CD4-positive, alpha-beta memory T cell (primary cell): ENCODE measurements at regions of chr9 and their contacts with region 1.

Region 1: DNA sequence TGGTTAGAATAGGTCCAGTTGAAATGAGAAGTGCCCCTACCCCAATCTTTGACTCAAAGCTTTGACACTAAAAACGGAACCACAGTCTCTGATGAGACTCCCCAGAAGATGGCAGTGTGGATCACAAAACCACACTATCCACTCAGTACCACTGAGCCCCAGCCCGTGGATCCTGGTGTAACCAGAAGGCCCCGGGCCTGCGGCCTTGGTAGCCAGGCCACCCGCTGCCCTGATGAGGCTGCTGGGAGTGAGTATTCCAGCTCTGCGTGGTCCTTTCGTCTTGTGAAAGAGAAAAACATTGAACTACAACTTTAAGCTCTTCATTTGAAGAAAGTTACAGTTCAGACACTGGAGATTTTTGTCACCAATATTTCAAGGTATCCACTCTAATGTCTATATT is 42.2 kb upstream of the FBP1 start:
- DNase-seq: peak; percentile 49 to 56 (median 55)
- H3K4me3 ChIP-seq: no peak overlapping the region
- H3K4me3 Mint-ChIP-seq: no peak overlapping the region
- H3K27ac ChIP-seq: no peak overlapping the region
- H3K27ac Mint-ChIP-seq: no peak overlapping the region
- H3K4me1 ChIP-seq: no peaks in the 10 kb centered on the region
- H3K4me1 Mint-ChIP-seq: no peaks in the 10 kb centered on the region
- H3K27me3 ChIP-seq: no peaks in the 10 kb centered on the region
- H3K27me3 Mint-ChIP-seq: peaks cover 0 to 3% of the 10 kb centered on the region in 2 donors

Region 2: DNA sequence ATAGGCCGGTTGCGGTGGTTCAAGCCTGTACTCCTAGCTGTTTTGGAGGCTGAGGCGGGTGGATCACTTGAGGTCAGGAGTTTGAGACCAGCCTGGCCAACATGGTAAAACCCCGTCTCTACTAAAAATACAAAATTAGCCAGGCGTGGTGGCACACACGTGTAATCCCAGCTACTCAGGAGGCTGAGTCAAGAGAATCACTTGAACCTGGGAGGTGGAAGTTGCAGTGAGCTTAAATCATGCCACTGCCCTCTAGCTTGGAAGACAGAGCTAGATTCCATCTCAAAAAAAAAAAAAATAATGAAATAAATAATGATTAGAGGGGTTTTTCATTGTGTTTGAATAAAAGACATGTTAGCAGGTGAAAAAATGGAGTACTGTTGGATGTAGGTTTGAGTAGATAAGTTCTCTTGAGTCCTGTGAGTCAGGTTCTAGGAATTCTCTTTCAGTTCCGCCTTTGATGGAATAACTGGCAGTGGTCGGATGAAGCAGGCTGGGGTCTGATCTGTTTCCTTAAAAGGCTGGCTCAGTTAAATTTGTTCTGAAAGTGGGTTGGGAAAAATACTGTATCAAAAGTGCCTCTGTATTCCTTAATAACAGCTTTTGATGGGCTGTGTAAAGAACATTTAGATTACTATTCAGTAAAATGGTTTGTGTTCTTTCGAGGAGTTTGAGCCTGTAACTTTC is 118.2 kb after region 1 on chr9:
- CTCF ChIA-PET with region 1: no interaction called
- POLR2A ChIA-PET with region 1: no interaction called
- intact Hi-C with region 1: no loop called
- DNase-seq: no peak
- H3K4me3 ChIP-seq: no peak overlapping the region
- H3K4me3 Mint-ChIP-seq: no peak overlapping the region
- H3K27ac ChIP-seq: no peak overlapping the region
- H3K27ac Mint-ChIP-seq: peak overlapping the region in 1 of 7 donors; percentile 63
- H3K4me1 ChIP-seq: no peaks in the 10 kb centered on the region
- H3K4me1 Mint-ChIP-seq: peaks cover 0 to 12% (median 4%) of the 10 kb centered on the region in 4 donors
- H3K27me3 ChIP-seq: no peaks in the 10 kb centered on the region
- H3K27me3 Mint-ChIP-seq: no peaks in the 10 kb centered on the region

Region 3: GRCh38 chr9:94917840-94918753 is 236.6 kb after region 1 on chr9:
- CTCF ChIA-PET with region 1: interaction called, 19 read pairs
- POLR2A ChIA-PET with region 1: no interaction called
- intact Hi-C with region 1: loop called (anchors 1 kb)
- DNase-seq: peak in 2 of 5 donors; percentile 4 to 13
- H3K4me3 ChIP-seq: no peak overlapping the region
- H3K4me3 Mint-ChIP-seq: no peak overlapping the region
- H3K27ac ChIP-seq: no peak overlapping the region
- H3K27ac Mint-ChIP-seq: peak overlapping the region in 3 of 7 donors; percentile 21 to 50 (median 32)
- H3K4me1 ChIP-seq: no peaks in the 10 kb centered on the region
- H3K4me1 Mint-ChIP-seq: peaks cover 0 to 1% (median under 1%) of the 10 kb centered on the region in 4 donors
- H3K27me3 ChIP-seq: no peaks in the 10 kb centered on the region
- H3K27me3 Mint-ChIP-seq: no peaks in the 10 kb centered on the region

Region 4: GRCh38 chr9:95167998-95168397 is 486.5 kb after region 1 on chr9:
- CTCF ChIA-PET with region 1: interaction called, 36 read pairs
- POLR2A ChIA-PET with region 1: no interaction called
- intact Hi-C with region 1: loop called (anchors 1 kb)
- DNase-seq: peak; percentile 42 to 62 (median 49)
- H3K4me3 ChIP-seq: no peak overlapping the region
- H3K4me3 Mint-ChIP-seq: peak overlapping the region in 3 of 8 donors; percentile 2 to 47 (median 16)
- H3K27ac ChIP-seq: no peak overlapping the region
- H3K27ac Mint-ChIP-seq: peak overlapping the region in 1 of 7 donors; percentile 68
- H3K4me1 ChIP-seq: no peaks in the 10 kb centered on the region
- H3K4me1 Mint-ChIP-seq: peaks cover 0 to 5% (median 3%) of the 10 kb centered on the region in 4 donors
- H3K27me3 ChIP-seq: no peaks in the 10 kb centered on the region
- H3K27me3 Mint-ChIP-seq: no peaks in the 10 kb centered on the region

Region 5: DNA sequence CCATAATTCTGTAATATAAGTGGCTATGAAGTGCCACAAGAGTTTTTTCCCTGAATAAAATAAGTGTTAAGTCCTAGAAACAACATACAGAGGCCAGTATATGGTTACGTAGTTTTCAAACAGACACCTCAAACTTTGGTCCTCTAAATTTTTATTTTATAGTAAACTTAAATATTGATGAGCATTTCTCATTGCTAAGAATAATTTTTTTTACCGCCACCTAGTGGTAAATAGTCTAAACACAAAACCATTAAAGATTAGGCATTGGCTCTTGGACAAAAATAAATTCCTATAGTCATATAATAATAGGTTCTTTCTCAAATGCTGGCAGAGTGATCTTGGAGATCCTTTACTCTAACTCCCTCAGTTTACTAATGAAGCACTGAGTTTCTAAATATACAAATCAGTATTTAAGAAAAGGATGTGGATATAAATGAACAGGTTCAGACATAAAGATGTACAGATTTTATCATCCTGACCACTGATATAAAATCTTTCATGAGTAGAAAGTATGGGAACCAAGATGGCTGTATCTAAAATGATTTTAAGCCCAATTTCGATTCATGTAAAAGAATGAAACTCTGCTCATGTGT is 499.8 kb after region 1 on chr9:
- CTCF ChIA-PET with region 1: interaction called, 19 read pairs
- POLR2A ChIA-PET with region 1: no interaction called
- intact Hi-C with region 1: loop called (anchors 1 kb)
- DNase-seq: peak in 3 of 5 donors; percentile 8 to 9 (median 8)
- H3K4me3 ChIP-seq: no peak overlapping the region
- H3K4me3 Mint-ChIP-seq: no peak overlapping the region
- H3K27ac ChIP-seq: no peak overlapping the region
- H3K27ac Mint-ChIP-seq: no peak overlapping the region
- H3K4me1 ChIP-seq: no peaks in the 10 kb centered on the region
- H3K4me1 Mint-ChIP-seq: no peaks in the 10 kb centered on the region
- H3K27me3 ChIP-seq: no peaks in the 10 kb centered on the region
- H3K27me3 Mint-ChIP-seq: no peaks in the 10 kb centered on the region

Region 6: GRCh38 chr9:96217754-96218693 is 1536.5 kb after region 1 on chr9:
- CTCF ChIA-PET with region 1: interaction called, 5 read pairs
- POLR2A ChIA-PET with region 1: no interaction called
- intact Hi-C with region 1: loop called (anchors 1 kb)
- DNase-seq: peak in 4 of 5 donors; percentile 62 to 65 (median 64)
- H3K4me3 ChIP-seq: peak overlapping the region in 1 of 2 donors; percentile 14
- H3K4me3 Mint-ChIP-seq: peak overlapping the region; percentile 59 to 89 (median 74)
- H3K27ac ChIP-seq: no peak overlapping the region
- H3K27ac Mint-ChIP-seq: peak overlapping the region in 2 of 7 donors; percentile 53 to 81
- H3K4me1 ChIP-seq: peaks cover 9% of the 10 kb centered on the region
- H3K4me1 Mint-ChIP-seq: peaks cover 3 to 18% (median 6%) of the 10 kb centered on the region in 4 donors
- H3K27me3 ChIP-seq: peaks cover 10% of the 10 kb centered on the region
- H3K27me3 Mint-ChIP-seq: peaks cover 28 to 39% of the 10 kb centered on the region in 2 donors